ENCODE measurements at regions of chr4 and their contacts with region 1.

Region 1: DNA sequence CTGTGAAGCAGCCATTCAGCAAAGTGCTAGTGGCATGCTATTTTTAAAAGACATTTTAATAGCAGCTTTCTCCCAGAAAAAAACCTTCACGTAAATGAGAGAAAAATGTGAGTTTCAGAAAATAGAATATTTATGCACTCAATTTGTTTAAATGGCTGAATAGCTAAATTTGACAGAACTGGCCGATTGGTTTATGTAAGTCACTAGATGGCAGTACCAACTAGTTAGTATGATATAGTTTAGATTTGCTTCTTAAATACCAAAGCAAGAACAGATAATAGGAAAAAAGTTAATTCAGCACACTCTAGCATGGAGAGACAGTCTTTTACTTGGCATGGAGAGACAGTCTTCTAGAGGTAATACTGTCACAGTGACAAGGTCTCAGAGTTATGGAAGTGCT is 250.1 kb downstream of the SNCA start:
- DNase-seq: no peak
- H3K4me3 ChIP-seq: no peak overlapping the region
- H3K27ac ChIP-seq: no peak overlapping the region
- H3K4me1 ChIP-seq: no peaks in the 10 kb centered on the region
- H3K27me3 ChIP-seq: no peaks in the 10 kb centered on the region
- CTCF ChIP-seq: 0 out of 2 replicates have a peak, but pooled peaks have one; percentile 22

Region 2: GRCh38 chr4:89509708-89510281 is 77.1 kb before region 1 on chr4:
- CTCF ChIA-PET with region 1: no interaction called
- POLR2A ChIA-PET with region 1: no interaction called
- intact Hi-C with region 1: loop called (anchors 5 kb)
- DNase-seq: no peak
- H3K4me3 ChIP-seq: no peak overlapping the region
- H3K27ac ChIP-seq: no peak overlapping the region
- H3K4me1 ChIP-seq: no peaks in the 10 kb centered on the region
- H3K27me3 ChIP-seq: no peaks in the 10 kb centered on the region
- CTCF ChIP-seq: no peak

Region 3: GRCh38 chr4:90281541-90282355 is 694.9 kb after region 1 on chr4:
- CTCF ChIA-PET with region 1: no interaction called
- POLR2A ChIA-PET with region 1: no interaction called
- intact Hi-C with region 1: no loop called
- DNase-seq: no peak
- H3K4me3 ChIP-seq: no peak overlapping the region
- H3K27ac ChIP-seq: no peak overlapping the region
- H3K4me1 ChIP-seq: no peaks in the 10 kb centered on the region
- H3K27me3 ChIP-seq: no peaks in the 10 kb centered on the region
- CTCF ChIP-seq: no peak